ENCODE measurements at regions of chr9 and their contacts with region 1.

Region 1: GRCh38 chr9:3467593-3468219 is 58.1 kb downstream of the RFX3 start:
- DNase-seq: peak; percentile 76
- H3K4me3 Mint-ChIP-seq: no peak overlapping the region
- H3K27ac Mint-ChIP-seq: no peak overlapping the region
- H3K4me1 Mint-ChIP-seq: no peaks in the 10 kb centered on the region
- H3K27me3 Mint-ChIP-seq: no peaks in the 10 kb centered on the region
- CTCF ChIP-seq: peak; percentile 87

Region 2: DNA sequence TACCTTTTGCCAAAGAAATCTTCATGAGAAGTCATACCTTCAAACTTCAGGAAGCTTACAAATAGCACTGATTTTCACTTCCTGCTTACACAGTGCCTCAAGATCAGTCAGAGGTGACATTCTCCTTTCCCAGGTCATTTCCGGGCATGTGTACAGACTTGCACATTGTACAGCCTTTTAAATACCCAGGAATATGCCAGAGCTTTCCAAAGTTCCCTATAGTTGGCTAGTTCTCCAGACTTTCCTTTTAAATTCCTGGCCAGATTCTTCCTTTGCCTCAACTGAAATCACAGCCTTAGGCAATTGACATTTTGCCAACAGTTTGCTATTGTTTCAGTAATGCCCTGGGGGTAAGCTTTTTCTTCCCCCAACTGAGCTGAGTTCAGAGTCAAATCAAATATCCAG is 10.8 kb after region 1 on chr9:
- CTCF ChIA-PET with region 1: interaction called, 25 read pairs
- POLR2A ChIA-PET with region 1: interaction called, 6 read pairs
- intact Hi-C with region 1: no loop called
- DNase-seq: peak; percentile 84
- H3K4me3 Mint-ChIP-seq: peak overlapping the region; percentile 44
- H3K27ac Mint-ChIP-seq: peak overlapping the region; percentile 91
- H3K4me1 Mint-ChIP-seq: peaks cover 30% of the 10 kb centered on the region
- H3K27me3 Mint-ChIP-seq: no peaks in the 10 kb centered on the region
- CTCF ChIP-seq: no peak

Region 3: DNA sequence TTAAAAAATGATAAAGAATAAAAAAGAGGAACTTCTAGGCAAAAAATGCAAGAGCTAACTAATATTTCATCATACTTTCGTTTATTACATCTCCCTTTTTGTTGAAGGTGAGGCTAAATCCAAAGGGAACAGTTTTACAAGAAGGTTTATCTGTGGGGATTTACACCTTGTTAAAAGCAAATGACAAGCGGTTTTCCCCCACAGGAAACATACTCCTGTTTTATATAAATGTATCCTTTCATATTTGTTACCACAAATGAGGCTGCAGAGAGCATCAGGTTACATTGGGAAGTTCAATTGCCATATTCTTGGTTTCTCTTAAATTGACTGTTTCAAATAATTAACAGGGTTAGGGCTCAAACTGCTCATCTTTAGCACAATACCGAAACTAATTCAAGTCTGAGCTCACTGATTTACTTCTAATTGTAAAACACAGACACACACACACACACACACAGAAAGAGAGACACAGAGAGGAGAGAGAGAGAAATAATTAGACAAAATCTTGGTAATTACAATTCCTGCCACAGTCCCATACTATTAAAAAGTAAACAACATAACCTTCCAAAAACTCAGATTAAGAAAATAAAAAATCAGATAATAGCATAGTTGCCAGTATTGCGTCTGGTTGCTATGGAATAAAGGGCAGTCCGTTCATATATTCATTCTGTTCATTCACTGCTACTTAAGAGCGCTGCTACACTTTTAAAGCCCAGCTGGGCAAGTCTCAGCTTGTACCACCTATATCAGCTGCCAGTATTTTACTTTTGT is 41.0 kb after region 1 on chr9:
- CTCF ChIA-PET with region 1: interaction called, 12 read pairs
- POLR2A ChIA-PET with region 1: interaction called, 6 read pairs
- intact Hi-C with region 1: no loop called
- DNase-seq: peak; percentile 70
- H3K4me3 Mint-ChIP-seq: peak overlapping the region; percentile 71
- H3K27ac Mint-ChIP-seq: peak overlapping the region; percentile 89
- H3K4me1 Mint-ChIP-seq: peaks cover 17% of the 10 kb centered on the region
- H3K27me3 Mint-ChIP-seq: no peaks in the 10 kb centered on the region
- CTCF ChIP-seq: no peak

Region 4: DNA sequence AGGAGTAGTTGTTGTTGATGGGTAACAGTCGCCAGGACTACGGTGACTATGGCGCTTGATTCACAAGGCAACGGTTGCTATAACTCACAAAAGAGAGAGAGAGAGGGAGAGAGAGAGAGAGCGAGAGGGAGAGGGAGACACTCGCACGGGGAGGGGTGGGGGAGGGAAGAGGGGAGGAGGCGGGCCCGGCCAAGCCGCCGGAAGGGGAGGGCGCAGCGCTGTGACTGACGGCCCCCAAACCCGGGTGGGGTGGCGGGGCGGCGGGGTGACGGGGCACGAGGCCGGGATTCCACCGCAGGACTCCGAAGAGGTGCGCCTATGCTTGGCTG is 58.1 kb after region 1 on chr9 and contains the start of gene RFX3:
- CTCF ChIA-PET with region 1: interaction called, 16 read pairs
- POLR2A ChIA-PET with region 1: interaction called, 12 read pairs
- intact Hi-C with region 1: loop called (anchors 1 kb)
- DNase-seq: peak; percentile 96
- H3K4me3 Mint-ChIP-seq: peak within 1 kb of the TSS; percentile 94
- H3K27ac Mint-ChIP-seq: peak within 1 kb of the TSS; percentile 100
- H3K4me1 Mint-ChIP-seq: peaks cover 33% of the 10 kb centered on the region
- H3K27me3 Mint-ChIP-seq: no peaks in the 10 kb centered on the region
- CTCF ChIP-seq: no peak
- total RNA-seq, gene RFX3: 9.2 and 9.7 TPM in 2 replicates

Region 5: DNA sequence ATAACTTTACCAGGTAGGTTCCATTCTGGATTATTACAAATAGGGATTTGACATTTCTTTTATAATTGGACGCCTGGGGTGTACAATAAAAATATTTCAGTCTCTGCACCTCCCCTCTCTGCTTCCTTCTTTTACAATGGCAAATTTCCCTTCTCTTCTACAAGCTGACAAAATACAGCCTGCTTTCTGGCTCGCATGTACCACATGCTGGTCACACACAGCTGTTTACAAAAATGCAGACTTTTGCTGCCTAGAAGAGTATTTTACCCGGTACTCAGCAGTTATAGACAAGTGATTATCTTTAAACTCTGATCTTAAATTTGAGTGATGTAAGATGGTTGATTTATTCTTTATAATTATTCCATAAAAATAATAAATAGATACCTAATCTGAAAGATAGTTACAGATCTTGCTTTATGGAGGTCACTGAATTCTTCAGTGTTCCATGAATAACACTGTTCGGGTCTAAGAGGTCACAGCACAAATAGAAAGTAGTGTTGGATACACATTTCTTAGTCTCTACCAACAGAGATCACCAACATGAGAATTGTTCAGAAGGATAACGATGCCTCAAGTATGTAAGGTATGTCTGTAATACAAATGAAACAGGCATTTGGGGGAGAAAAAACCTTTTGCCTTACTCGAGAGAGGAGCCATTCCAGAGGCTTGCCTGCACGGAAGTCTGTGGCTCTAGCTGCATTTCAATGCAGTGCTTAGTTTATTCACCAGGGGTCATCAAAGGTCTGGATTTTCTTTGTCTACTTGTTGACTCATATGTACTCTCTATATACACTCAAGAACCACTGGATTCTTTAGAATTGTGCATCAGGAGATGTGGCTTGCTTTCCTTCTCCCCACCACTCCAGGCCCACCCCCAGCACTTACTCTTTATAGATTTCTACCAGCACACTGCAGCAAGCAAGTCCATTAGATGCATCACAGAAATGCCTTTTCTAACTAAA is 264.7 kb after region 1 on chr9:
- CTCF ChIA-PET with region 1: interaction called, 9 read pairs
- POLR2A ChIA-PET with region 1: no interaction called
- intact Hi-C with region 1: loop called (anchors 2 kb)
- DNase-seq: peak; percentile 84
- H3K4me3 Mint-ChIP-seq: no peak overlapping the region
- H3K27ac Mint-ChIP-seq: no peak overlapping the region
- H3K4me1 Mint-ChIP-seq: peaks cover 10% of the 10 kb centered on the region
- H3K27me3 Mint-ChIP-seq: no peaks in the 10 kb centered on the region
- CTCF ChIP-seq: peak; percentile 64

Region 6: GRCh38 chr9:4339357-4339756 is 871.7 kb after region 1 on chr9:
- CTCF ChIA-PET with region 1: interaction called, 3 read pairs
- POLR2A ChIA-PET with region 1: no interaction called
- intact Hi-C with region 1: loop called (anchors 1 kb)
- DNase-seq: peak; percentile 90
- H3K4me3 Mint-ChIP-seq: no peak overlapping the region
- H3K27ac Mint-ChIP-seq: no peak overlapping the region
- H3K4me1 Mint-ChIP-seq: peaks cover 10% of the 10 kb centered on the region
- H3K27me3 Mint-ChIP-seq: no peaks in the 10 kb centered on the region
- CTCF ChIP-seq: peak; percentile 92